ENCODE measurements at regions of chrX and their contacts with region 1.

Region 1: DNA sequence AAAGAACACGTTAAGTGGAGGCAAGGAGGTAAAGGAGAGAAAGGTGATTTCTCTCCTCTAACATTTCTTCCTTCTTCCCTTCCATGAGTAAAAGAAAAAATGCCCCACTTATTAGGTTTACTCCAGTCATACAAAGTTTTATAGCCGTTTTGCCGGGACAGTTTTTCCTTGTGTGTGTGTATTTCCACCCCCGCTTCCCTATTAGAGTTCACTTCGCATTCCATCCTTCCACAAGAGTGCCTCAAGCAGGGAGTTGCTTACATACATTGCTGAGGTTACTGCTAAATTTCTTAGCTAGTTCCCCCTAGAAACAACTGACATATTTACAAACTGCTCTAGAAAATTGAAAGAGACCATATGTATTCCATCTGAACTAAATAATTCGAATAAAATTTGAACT is 45.2 kb upstream of the BMP15 start:
- DNase-seq: no peak
- H3K4me3 ChIP-seq: no peak overlapping the region
- H3K27me3 ChIP-seq: no peaks in the 10 kb centered on the region
- CTCF ChIP-seq: no peak

Region 2: DNA sequence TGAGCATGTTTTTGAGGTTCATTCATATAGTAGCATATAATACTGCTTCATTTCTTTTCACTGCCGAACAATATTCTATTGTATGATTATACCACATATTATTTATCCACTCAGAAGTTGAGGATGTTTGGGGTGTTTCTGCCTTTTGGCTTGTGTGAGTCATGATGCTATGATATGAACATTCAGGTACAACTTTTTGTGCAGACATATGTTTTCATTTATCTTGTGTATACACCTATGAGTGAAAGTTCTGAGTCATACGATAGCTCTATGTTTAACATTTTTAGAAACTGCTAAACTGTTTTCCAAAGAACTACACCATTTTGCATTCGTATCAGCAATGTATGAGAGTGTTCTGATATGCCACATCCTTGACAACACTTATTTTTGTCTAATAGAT is 109.0 kb before region 1 on chrX:
- CTCF ChIA-PET with region 1: no interaction called
- POLR2A ChIA-PET with region 1: no interaction called
- DNase-seq: no peak
- H3K4me3 ChIP-seq: no peak overlapping the region
- H3K27me3 ChIP-seq: no peaks in the 10 kb centered on the region
- CTCF ChIP-seq: no peak

Region 3: DNA sequence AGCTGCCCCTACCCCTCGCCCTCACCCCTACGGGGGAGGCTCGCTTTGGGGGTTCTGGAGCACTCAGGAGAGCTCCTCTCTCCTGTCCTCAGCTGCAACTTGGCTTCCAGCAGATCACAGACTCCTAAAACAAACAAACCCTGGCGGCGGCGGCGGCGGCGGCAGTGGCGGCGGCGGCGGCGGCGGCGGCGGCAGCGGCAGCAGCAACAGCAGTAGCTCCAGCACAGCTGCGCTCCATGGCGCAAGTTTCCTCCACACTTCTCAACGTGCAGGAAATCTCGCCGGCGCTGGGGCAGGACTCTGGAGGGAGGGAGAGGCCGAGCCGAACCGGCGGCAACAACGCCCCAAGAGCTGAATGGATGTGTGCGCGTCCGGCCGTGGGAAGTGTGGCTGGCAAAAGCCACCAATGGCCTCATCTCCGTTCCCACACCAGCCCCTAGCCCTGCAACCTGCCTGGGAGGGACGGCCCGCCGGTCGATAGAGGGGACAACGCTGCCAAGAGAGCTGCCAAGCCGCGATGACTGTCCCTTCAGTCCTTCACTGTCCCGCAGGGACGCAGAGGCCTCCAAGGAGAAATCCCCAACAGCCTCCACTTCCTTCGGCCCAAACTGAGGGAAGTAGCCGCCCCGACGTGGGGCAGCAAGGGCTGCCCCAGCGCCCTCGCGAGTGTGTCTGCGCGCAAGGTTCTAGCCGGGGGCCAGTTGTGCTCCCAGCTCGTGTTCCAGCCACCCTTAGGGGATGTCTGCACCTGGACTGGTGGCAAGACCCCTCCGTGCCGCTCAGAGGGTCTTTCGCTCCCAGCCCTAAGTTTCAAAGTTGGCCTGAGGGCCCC is 52.1 kb before region 1 on chrX:
- CTCF ChIA-PET with region 1: no interaction called
- POLR2A ChIA-PET with region 1: interaction called, 13 read pairs
- DNase-seq: no peak
- H3K4me3 ChIP-seq: peak overlapping the region; percentile 44
- H3K27me3 ChIP-seq: no peaks in the 10 kb centered on the region
- CTCF ChIP-seq: no peak

Measured in BJ (cell line).